Left ventricle myocardium inferior (tissue), 1 donor: ENCODE measurements at regions of chr12 and their contacts with region 1.

Region 1: GRCh38 chr12:117367011-117367638 is 5.7 kb upstream of the NOS1 start:
- DNase-seq: peak; percentile 30
- H3K4me3 ChIP-seq: no peak overlapping the region
- H3K27ac ChIP-seq: no peak overlapping the region
- H3K4me1 ChIP-seq: no peaks in the 10 kb centered on the region
- H3K27me3 ChIP-seq: peaks cover 59% of the 10 kb centered on the region
- CTCF ChIP-seq: peak; percentile 92

Region 2: GRCh38 chr12:117587631-117588287 is 220.6 kb after region 1 on chr12:
- intact Hi-C with region 1: loop called (anchors 2 kb)
- DNase-seq: peak; percentile 25
- H3K4me3 ChIP-seq: no peak overlapping the region
- H3K27ac ChIP-seq: no peak overlapping the region
- H3K4me1 ChIP-seq: no peaks in the 10 kb centered on the region
- H3K27me3 ChIP-seq: peaks cover 69% of the 10 kb centered on the region
- CTCF ChIP-seq: peak; percentile 85